Endothelial cell of umbilical vein (primary cell): ENCODE measurements at regions of chr1 and their contacts with region 1.

Region 1: GRCh38 chr1:56456436-56457101 is 122.8 kb downstream of the PLPP3 start:
- DNase-seq: peak; percentile 71
- H3K4me3 ChIP-seq: no peak overlapping the region
- H3K27ac ChIP-seq: peak overlapping the region; percentile 67
- H3K4me1 ChIP-seq: peaks cover 21% of the 10 kb centered on the region
- H3K27me3 ChIP-seq: no peaks in the 10 kb centered on the region
- CTCF ChIP-seq: no peak
- POLR2A ChIP-seq: no peak

Region 2: DNA sequence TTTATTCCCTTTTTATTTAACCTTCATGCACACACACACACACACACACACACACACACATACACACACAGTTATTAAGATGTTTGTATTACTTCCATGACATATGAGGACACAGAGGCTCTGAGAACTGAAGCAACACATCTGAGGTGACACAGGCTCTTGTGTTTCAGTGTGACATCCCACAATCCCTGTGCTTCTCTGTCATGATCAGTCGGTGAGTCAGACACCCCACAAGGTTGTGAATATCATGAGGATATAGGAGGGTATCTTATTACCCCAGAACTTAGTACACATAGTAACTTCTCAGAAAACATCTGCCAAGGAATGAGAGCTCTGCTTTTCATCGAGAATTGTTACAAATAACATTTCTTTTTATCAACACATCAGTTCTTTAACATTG is 336.5 kb before region 1 on chr1:
- CTCF ChIA-PET with region 1: no interaction called
- POLR2A ChIA-PET with region 1: no interaction called
- dilution Hi-C with region 1: no loop called
- intact Hi-C with region 1: no loop called
- DNase-seq: no peak
- H3K4me3 ChIP-seq: no peak overlapping the region
- H3K27ac ChIP-seq: no peak overlapping the region
- H3K4me1 ChIP-seq: no peaks in the 10 kb centered on the region
- H3K27me3 ChIP-seq: no peaks in the 10 kb centered on the region
- CTCF ChIP-seq: no peak
- POLR2A ChIP-seq: no peak

Region 3: GRCh38 chr1:56411484-56412180 is 44.9 kb before region 1 on chr1:
- CTCF ChIA-PET with region 1: interaction called, 3 read pairs
- POLR2A ChIA-PET with region 1: no interaction called
- dilution Hi-C with region 1: no loop called
- intact Hi-C with region 1: loop called (anchors 5 kb)
- DNase-seq: peak; percentile 95
- H3K4me3 ChIP-seq: no peak overlapping the region
- H3K27ac ChIP-seq: peak overlapping the region; percentile 49
- H3K4me1 ChIP-seq: peaks cover 19% of the 10 kb centered on the region
- H3K27me3 ChIP-seq: no peaks in the 10 kb centered on the region
- CTCF ChIP-seq: peak; percentile 38 to 60
- POLR2A ChIP-seq: no peak

Region 4: GRCh38 chr1:56469640-56470371 is 13.2 kb after region 1 on chr1:
- CTCF ChIA-PET with region 1: interaction called, 15 read pairs
- POLR2A ChIA-PET with region 1: no interaction called
- dilution Hi-C with region 1: no loop called
- intact Hi-C with region 1: no loop called
- DNase-seq: peak; percentile 62
- H3K4me3 ChIP-seq: no peak overlapping the region
- H3K27ac ChIP-seq: peak overlapping the region; percentile 31
- H3K4me1 ChIP-seq: peaks cover 8% of the 10 kb centered on the region
- H3K27me3 ChIP-seq: no peaks in the 10 kb centered on the region
- CTCF ChIP-seq: no peak
- POLR2A ChIP-seq: no peak